Activated T-helper 1 cell treated with anti-CD3 and anti-CD28 coated beads, Interleukin-12 subunit alpha, Interleukin-12 subunit beta, Interleukin-2, Interleukin-4 antibody, amounts not matched to agents 30 ng/mL and 10 ng/mL and 1 ng/mL, durations not matched to agents 14 hours and 24 hours and 36 hours (primary cell): ENCODE measurements at regions of chr1 and their contacts with region 1.

Region 1: GRCh38 chr1:147494998-147495580 is 46.2 kb upstream of the BCL9 start:
- DNase-seq: peak; percentile 60
- H3K4me3 Mint-ChIP-seq: no peak overlapping the region
- H3K27ac Mint-ChIP-seq: no peak overlapping the region
- H3K4me1 Mint-ChIP-seq: peaks cover 7% of the 10 kb centered on the region
- H3K27me3 Mint-ChIP-seq: peaks cover 6% of the 10 kb centered on the region

Region 2: GRCh38 chr1:147156638-147157037 is 338.5 kb before region 1 on chr1:
- intact Hi-C with region 1: no loop called
- DNase-seq: no peak
- H3K4me3 Mint-ChIP-seq: no peak overlapping the region
- H3K27ac Mint-ChIP-seq: no peak overlapping the region
- H3K4me1 Mint-ChIP-seq: no peaks in the 10 kb centered on the region
- H3K27me3 Mint-ChIP-seq: peaks cover 2% of the 10 kb centered on the region

Region 3: GRCh38 chr1:147273409-147274336 is 221.4 kb before region 1 on chr1:
- intact Hi-C with region 1: loop called (anchors 10 kb)
- DNase-seq: peak; percentile 11
- H3K4me3 Mint-ChIP-seq: no peak overlapping the region
- H3K27ac Mint-ChIP-seq: no peak overlapping the region
- H3K4me1 Mint-ChIP-seq: no peaks in the 10 kb centered on the region
- H3K27me3 Mint-ChIP-seq: no peaks in the 10 kb centered on the region

Region 4: GRCh38 chr1:147618077-147618569 is 123.0 kb after region 1 on chr1:
- intact Hi-C with region 1: loop called (anchors 2 kb)
- DNase-seq: peak; percentile 55
- H3K4me3 Mint-ChIP-seq: peak overlapping the region; percentile 15
- H3K27ac Mint-ChIP-seq: peak overlapping the region; percentile 74
- H3K4me1 Mint-ChIP-seq: peaks cover 40% of the 10 kb centered on the region
- H3K27me3 Mint-ChIP-seq: no peaks in the 10 kb centered on the region

Region 5: GRCh38 chr1:147627435-147628110 is 132.5 kb after region 1 on chr1:
- intact Hi-C with region 1: loop called (anchors 1 kb)
- DNase-seq: peak; percentile 20
- H3K4me3 Mint-ChIP-seq: no peak overlapping the region
- H3K27ac Mint-ChIP-seq: no peak overlapping the region
- H3K4me1 Mint-ChIP-seq: peaks cover 36% of the 10 kb centered on the region
- H3K27me3 Mint-ChIP-seq: no peaks in the 10 kb centered on the region

Region 6: DNA sequence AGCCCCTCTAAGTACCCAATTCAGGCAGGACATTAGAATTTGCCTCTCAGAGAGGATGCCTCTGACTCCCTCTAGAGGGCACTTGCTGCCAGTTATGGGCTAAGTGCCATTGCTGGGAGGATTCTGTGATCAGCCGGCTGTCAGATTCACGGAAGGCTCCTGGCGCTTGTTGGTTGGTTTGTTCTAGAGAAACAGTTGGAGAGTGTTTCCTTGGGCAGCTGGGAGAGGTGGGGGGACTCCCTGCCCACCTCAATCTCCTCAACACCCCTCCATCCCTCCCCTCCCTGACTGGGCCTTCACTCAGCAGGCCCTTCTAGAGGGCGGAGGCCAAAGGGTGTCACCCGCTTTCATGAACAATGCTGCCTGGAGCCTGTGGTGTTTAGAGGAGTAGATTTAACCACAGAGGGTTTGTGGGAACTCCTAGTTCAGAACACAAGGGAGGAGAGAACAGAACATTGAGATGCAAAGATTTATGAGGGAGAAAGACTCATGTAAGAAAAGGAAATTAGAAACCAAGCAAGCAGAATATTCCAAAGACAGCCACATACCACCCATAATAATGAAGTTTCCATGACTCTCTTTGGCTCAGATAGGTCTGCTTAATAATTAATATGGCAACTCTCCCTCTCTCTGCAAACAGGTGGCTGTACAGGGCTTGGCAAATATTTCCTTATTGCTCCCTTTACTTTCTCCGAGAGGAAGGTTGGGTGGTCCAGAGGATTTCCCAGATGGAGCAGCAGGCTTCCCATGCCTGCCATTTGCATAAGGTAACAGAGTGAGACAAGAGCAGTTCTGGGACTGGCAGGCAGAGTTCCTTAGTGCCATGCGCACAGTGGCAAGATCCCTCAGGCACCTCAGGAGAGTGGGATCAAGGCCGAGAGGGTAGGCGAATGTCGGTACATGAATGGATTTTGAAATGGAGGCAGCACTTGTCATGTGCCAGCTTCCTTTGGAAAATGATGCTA is 205.2 kb after region 1 on chr1:
- intact Hi-C with region 1: loop called (anchors 1 kb)
- DNase-seq: peak; percentile 45
- H3K4me3 Mint-ChIP-seq: no peak overlapping the region
- H3K27ac Mint-ChIP-seq: no peak overlapping the region
- H3K4me1 Mint-ChIP-seq: peaks cover 9% of the 10 kb centered on the region
- H3K27me3 Mint-ChIP-seq: peaks cover 30% of the 10 kb centered on the region

Region 7: DNA sequence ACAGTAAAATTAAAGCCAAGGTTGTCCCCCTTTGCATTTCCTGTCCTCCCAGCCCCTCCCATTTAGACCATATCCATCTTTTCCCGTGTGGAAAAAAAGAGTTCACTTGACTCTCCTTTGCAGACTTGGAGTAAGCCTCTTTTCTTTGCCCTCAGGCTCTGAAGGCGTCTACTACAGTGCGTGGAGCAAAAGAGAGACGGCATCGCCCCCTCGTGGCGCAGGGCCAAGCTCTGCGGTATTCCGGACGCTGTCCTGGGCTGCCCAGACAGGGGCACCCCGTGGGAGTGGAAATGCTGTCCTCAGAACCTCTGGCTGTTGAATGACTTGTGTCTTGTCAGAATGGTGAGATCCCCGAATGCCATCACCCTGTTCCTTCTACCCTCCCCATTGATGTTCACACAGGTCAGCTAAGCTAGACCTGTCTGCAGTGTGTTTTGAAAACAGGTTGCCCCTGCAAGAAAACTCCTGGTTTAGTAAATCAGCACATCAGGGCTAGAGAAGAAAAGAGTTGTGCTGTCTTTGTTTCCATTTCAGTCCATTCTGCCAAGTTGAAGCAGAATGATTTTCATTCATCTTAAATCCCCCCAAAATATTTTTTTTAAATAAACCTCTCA is 395.2 kb after region 1 on chr1:
- intact Hi-C with region 1: loop called (anchors 1 kb)
- DNase-seq: peak; percentile 42
- H3K4me3 Mint-ChIP-seq: no peak overlapping the region
- H3K27ac Mint-ChIP-seq: no peak overlapping the region
- H3K4me1 Mint-ChIP-seq: no peaks in the 10 kb centered on the region
- H3K27me3 Mint-ChIP-seq: peaks cover 14% of the 10 kb centered on the region